ENCODE measurements at regions of chr3 and their contacts with region 1.

Region 1: GRCh38 chr3:98556164-98557130 is 24.7 kb downstream of the GPR15 start:
- DNase-seq: peak; percentile 99
- ATAC-seq: peak; percentile 55
- H3K4me3 ChIP-seq: peak overlapping the region; percentile 58
- H3K27ac ChIP-seq: peak overlapping the region; percentile 100
- H3K4me1 ChIP-seq: peaks cover 20% of the 10 kb centered on the region
- H3K27me3 ChIP-seq: no peaks in the 10 kb centered on the region
- CTCF ChIP-seq: no peak
- EP300 ChIP-seq: peak; percentile 100
- POLR2A ChIP-seq: peak; percentile 49; the same call in 1 of the 2 replicates
- RAD21 ChIP-seq: peak; percentile 35; the same call in 1 of the 2 replicates

Region 2: DNA sequence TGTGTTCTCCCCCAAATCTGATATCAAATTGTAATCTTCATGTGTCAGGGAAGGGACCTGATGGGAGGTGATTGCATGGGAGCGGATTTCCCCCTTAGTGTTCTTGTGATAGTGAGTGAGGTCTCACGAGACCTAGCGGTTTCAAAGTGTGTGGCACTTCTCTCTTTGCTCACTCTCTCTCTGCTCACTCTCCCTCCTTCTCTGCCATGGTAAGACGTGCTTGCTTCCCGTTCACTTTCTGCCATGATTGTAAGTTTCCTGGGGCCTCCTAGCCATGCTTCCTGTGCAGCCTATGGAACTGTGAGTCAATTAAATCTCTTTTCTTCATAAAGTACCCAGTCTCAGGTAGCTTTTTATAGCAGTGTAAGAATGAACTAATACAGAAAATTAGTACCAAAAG is 323.0 kb before region 1 on chr3:
- CTCF ChIA-PET with region 1: no interaction called
- POLR2A ChIA-PET with region 1: no interaction called
- RAD21 ChIA-PET with region 1: interaction called, 3 read pairs
- SMC1A ChIA-PET with region 1: no interaction called
- in situ Hi-C with region 1: no loop called
- intact Hi-C with region 1: loop called (anchors 5 kb)
- DNase-seq: peak; percentile 72
- ATAC-seq: peak; percentile 86
- H3K4me3 ChIP-seq: no peak overlapping the region
- H3K27ac ChIP-seq: no peak overlapping the region
- H3K4me1 ChIP-seq: no peaks in the 10 kb centered on the region
- H3K27me3 ChIP-seq: no peaks in the 10 kb centered on the region
- CTCF ChIP-seq: no peak
- EP300 ChIP-seq: no peak
- POLR2A ChIP-seq: no peak
- RAD21 ChIP-seq: no peak

Region 3: DNA sequence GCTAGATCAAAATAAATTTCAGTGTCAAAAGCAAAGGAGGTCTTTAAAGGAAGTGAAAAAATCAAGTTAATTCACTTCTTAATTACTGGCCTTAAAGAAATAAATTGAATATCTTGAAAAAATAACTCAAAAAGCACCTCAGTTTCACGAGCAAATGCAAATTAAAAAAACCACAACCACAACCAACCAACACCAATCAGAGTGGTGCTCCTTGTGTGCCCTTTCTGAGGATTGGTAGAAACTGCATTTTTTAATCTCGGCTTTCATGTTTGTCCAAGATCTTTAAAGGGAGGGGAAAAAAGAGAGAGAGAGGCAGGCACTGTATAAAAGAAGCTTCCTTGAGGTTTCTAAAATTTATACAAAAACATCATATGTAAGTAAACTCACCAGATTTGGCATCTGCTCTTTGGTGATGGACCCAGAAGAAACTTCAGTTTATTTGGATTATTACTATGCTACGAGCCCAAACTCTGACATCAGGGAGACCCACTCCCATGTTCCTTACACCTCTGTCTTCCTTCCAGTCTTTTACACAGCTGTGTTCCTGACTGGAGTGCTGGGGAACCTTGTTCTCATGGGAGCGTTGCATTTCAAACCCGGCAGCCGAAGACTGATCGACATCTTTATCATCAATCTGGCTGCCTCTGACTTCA is 24.7 kb before region 1 on chr3 and contains the start of gene GPR15:
- CTCF ChIA-PET with region 1: interaction called, 32 read pairs
- POLR2A ChIA-PET with region 1: interaction called, 350 read pairs
- RAD21 ChIA-PET with region 1: interaction called, 511 read pairs
- SMC1A ChIA-PET with region 1: interaction called, 603 read pairs
- in situ Hi-C with region 1: loop called (anchors 5 kb)
- intact Hi-C with region 1: loop called (anchors 1 kb)
- DNase-seq: no peak
- ATAC-seq: peak; percentile 44
- H3K4me3 ChIP-seq: peak within 1 kb of the TSS; percentile 81
- H3K27ac ChIP-seq: peak within 1 kb of the TSS; percentile 97
- H3K4me1 ChIP-seq: peaks cover 3% of the 10 kb centered on the region; the same call in 1 of the 2 replicates
- H3K27me3 ChIP-seq: no peaks in the 10 kb centered on the region
- CTCF ChIP-seq: no peak
- EP300 ChIP-seq: no peak; a peak in 1 of 4 replicates
- POLR2A ChIP-seq: no peak
- RAD21 ChIP-seq: no peak
- polyA plus RNA-seq, gene GPR15: 70.7 to 145 TPM

Region 4: DNA sequence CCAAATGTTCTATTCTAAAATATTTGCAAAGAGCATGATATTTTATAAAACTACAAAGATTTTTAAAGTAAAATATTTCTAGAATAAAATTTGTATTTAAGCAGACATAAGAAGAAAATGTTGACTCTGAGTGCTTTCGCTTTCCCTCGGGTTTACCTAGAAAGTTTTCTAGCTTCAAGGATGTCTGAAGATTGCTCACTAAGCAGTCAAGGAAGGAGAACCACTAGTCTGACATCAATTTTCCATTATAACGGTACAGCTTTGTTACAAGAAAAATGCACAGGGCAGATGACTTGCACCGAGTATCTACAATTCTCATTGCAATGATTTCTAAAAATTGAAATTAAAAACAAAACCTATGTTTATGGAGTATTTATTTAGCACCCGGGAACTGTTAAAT is 10.5 kb before region 1 on chr3:
- CTCF ChIA-PET with region 1: interaction called, 21 read pairs
- POLR2A ChIA-PET with region 1: interaction called, 350 read pairs
- RAD21 ChIA-PET with region 1: interaction called, 511 read pairs
- SMC1A ChIA-PET with region 1: interaction called, 603 read pairs
- in situ Hi-C with region 1: no loop called
- intact Hi-C with region 1: no loop called
- DNase-seq: no peak
- ATAC-seq: peak; percentile 49
- H3K4me3 ChIP-seq: peak overlapping the region; percentile 72
- H3K27ac ChIP-seq: peak overlapping the region; percentile 63
- H3K4me1 ChIP-seq: peaks cover 39% of the 10 kb centered on the region; the same call in 1 of the 2 replicates
- H3K27me3 ChIP-seq: no peaks in the 10 kb centered on the region
- CTCF ChIP-seq: no peak
- EP300 ChIP-seq: no peak
- POLR2A ChIP-seq: no peak
- RAD21 ChIP-seq: no peak

Region 5: DNA sequence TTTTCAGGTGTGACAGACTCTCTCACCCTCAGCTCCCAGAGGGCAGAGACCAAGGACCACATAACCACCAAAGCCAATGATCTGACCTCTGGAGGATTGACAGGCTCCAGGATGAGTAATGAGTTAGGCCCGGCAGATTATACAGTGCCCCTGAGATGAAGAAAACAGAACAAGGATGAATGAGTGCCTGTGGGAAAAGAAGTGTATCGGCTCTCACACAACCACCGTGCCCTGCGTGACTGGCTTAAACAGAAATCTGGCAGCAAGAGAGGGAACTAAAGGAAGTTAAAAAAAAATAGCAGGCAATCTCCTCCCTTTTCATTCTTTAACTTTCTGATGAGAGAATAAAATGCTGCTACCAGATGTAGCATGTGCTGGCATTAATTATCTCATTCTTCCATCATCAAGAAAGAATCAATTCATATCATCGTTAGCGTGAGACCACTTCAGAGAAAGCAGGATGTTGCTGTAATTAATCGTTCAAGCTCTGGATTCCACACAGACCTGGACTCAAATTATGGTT is 854.4 kb after region 1 on chr3:
- CTCF ChIA-PET with region 1: no interaction called
- POLR2A ChIA-PET with region 1: no interaction called
- RAD21 ChIA-PET with region 1: no interaction called
- SMC1A ChIA-PET with region 1: no interaction called
- in situ Hi-C with region 1: no loop called
- intact Hi-C with region 1: loop called (anchors 10 kb)
- DNase-seq: peak; percentile 48
- ATAC-seq: peak; percentile 87
- H3K4me3 ChIP-seq: no peak overlapping the region
- H3K27ac ChIP-seq: no peak overlapping the region; the same call in 1 of the 2 replicates
- H3K4me1 ChIP-seq: no peaks in the 10 kb centered on the region; the same call in 1 of the 2 replicates
- H3K27me3 ChIP-seq: no peaks in the 10 kb centered on the region
- CTCF ChIP-seq: no peak
- EP300 ChIP-seq: no peak
- POLR2A ChIP-seq: no peak
- RAD21 ChIP-seq: 0 out of 2 replicates have a peak, but pooled peaks have one; percentile 6